CD8-positive, alpha-beta memory T cell (primary cell): ENCODE measurements at regions of chr7 and their contacts with region 1.

Region 1: DNA sequence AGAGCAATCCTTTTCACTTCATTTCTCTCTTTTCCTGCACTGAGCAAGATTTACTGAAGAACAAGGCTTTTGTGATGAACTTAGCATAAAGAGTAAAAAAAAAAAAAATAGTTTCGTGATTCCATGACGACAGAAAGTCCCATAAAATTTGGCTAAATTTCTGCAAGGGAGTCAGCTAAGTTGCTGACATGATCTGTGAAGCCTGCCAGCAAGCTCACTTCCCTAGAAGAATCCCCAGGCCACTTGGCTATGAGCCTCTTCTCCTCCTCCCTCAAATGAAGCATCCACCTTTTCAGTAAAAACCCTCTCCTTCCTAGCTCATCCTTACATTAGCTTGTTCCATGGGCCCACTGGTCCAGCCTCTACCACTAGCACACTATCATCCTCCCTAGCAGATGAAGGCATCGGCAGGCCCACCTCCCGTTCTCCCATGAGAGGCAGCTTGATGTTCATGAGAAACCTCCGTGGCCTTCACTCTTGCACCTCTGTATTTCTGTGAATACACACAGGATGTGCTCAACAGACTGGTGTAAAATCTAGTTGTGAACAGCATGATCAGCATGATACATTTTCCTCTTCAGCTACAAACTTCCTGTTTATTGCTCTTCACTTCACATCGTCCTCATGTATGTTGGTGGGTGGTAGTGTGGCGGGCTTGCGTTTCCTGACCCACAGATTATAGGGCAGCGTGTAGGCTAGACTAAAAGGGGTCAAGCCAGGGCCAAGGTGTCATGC is 30.9 kb downstream of the GIMAP8 start:
- DNase-seq: peak; percentile 32 to 78 (median 68)
- H3K4me3 ChIP-seq: peak overlapping the region; percentile 40
- H3K4me3 Mint-ChIP-seq: peak overlapping the region; percentile 72 to 91 (median 88)
- H3K27ac ChIP-seq: peak overlapping the region; percentile 75
- H3K27ac Mint-ChIP-seq: peak overlapping the region; percentile 94 to 100 (median 98)
- H3K4me1 ChIP-seq: peaks cover 98% of the 10 kb centered on the region
- H3K4me1 Mint-ChIP-seq: peaks cover 89 to 99% (median 98%) of the 10 kb centered on the region in 3 donors
- H3K27me3 ChIP-seq: no peaks in the 10 kb centered on the region
- H3K27me3 Mint-ChIP-seq: peaks cover 0 to 1% of the 10 kb centered on the region in 2 donors

Region 2: GRCh38 chr7:150413640-150414081 is 67.7 kb before region 1 on chr7:
- CTCF ChIA-PET with region 1: no interaction called
- POLR2A ChIA-PET with region 1: no interaction called
- DNase-seq: no peak
- H3K4me3 ChIP-seq: no peak overlapping the region
- H3K4me3 Mint-ChIP-seq: no peak overlapping the region
- H3K27ac ChIP-seq: no peak overlapping the region
- H3K27ac Mint-ChIP-seq: no peak overlapping the region
- H3K4me1 ChIP-seq: no peaks in the 10 kb centered on the region
- H3K4me1 Mint-ChIP-seq: peaks cover 2 to 3% (median 3%) of the 10 kb centered on the region in 3 donors
- H3K27me3 ChIP-seq: no peaks in the 10 kb centered on the region
- H3K27me3 Mint-ChIP-seq: no peaks in the 10 kb centered on the region

Region 3: GRCh38 chr7:150428671-150429451 is 52.5 kb before region 1 on chr7:
- CTCF ChIA-PET with region 1: no interaction called
- POLR2A ChIA-PET with region 1: no interaction called
- DNase-seq: no peak
- H3K4me3 ChIP-seq: no peak overlapping the region
- H3K4me3 Mint-ChIP-seq: no peak overlapping the region
- H3K27ac ChIP-seq: no peak overlapping the region
- H3K27ac Mint-ChIP-seq: no peak overlapping the region
- H3K4me1 ChIP-seq: peaks cover 6% of the 10 kb centered on the region
- H3K4me1 Mint-ChIP-seq: peaks cover 8 to 18% (median 16%) of the 10 kb centered on the region in 3 donors
- H3K27me3 ChIP-seq: no peaks in the 10 kb centered on the region
- H3K27me3 Mint-ChIP-seq: peaks cover 7 to 10% of the 10 kb centered on the region in 2 donors

Region 4: DNA sequence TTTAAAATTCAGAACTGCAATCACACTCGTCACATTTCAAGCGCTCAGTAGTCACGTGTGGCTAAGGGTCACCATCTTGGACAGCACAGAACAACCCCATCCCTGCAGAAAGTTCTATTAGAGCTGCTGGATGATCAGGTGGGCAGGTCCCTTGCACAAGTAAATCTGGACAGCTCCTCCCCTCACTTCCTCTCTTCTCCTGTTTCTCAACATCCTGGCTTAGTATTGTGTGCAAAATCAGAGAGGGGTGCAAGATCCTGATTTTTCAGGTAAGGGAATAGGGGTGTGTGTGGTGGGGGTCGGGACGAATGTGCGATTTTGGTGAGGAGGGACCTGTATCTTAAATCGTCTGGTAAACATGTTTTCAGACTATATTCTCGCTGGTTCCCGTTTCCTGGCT is 85.8 kb after region 1 on chr7 and contains the start of gene GIMAP4:
- CTCF ChIA-PET with region 1: interaction called, 10 read pairs
- POLR2A ChIA-PET with region 1: interaction called, 3 read pairs
- DNase-seq: peak in 2 of 5 donors; percentile 36 to 56
- H3K4me3 ChIP-seq: peak within 1 kb of the TSS; percentile 90
- H3K4me3 Mint-ChIP-seq: peak within 1 kb of the TSS; percentile 97 to 100 (median 100)
- H3K27ac ChIP-seq: peak within 1 kb of the TSS; percentile 67
- H3K27ac Mint-ChIP-seq: peak within 1 kb of the TSS; percentile 86 to 99 (median 98)
- H3K4me1 ChIP-seq: peaks cover 74% of the 10 kb centered on the region
- H3K4me1 Mint-ChIP-seq: peaks cover 72 to 86% (median 85%) of the 10 kb centered on the region in 3 donors
- H3K27me3 ChIP-seq: no peaks in the 10 kb centered on the region
- H3K27me3 Mint-ChIP-seq: peaks cover 0 to 4% of the 10 kb centered on the region in 2 donors
- total RNA-seq, gene GIMAP4: 57.3 to 59.3 TPM

Region 5: GRCh38 chr7:151172273-151173141 is 691.2 kb after region 1 on chr7:
- CTCF ChIA-PET with region 1: no interaction called
- POLR2A ChIA-PET with region 1: no interaction called
- DNase-seq: peak; percentile 72 to 84 (median 73)
- H3K4me3 ChIP-seq: no peak overlapping the region
- H3K4me3 Mint-ChIP-seq: no peak overlapping the region
- H3K27ac ChIP-seq: no peak overlapping the region
- H3K27ac Mint-ChIP-seq: peak overlapping the region in 3 of 8 donors; percentile 0 to 50 (median 21)
- H3K4me1 ChIP-seq: no peaks in the 10 kb centered on the region
- H3K4me1 Mint-ChIP-seq: peaks cover 14 to 17% (median 16%) of the 10 kb centered on the region in 3 donors
- H3K27me3 ChIP-seq: peaks cover 11% of the 10 kb centered on the region
- H3K27me3 Mint-ChIP-seq: peaks cover 43 to 67% of the 10 kb centered on the region in 2 donors